Natural killer cell (primary cell): ENCODE measurements at regions of chr11 and their contacts with region 1.

Region 1: DNA sequence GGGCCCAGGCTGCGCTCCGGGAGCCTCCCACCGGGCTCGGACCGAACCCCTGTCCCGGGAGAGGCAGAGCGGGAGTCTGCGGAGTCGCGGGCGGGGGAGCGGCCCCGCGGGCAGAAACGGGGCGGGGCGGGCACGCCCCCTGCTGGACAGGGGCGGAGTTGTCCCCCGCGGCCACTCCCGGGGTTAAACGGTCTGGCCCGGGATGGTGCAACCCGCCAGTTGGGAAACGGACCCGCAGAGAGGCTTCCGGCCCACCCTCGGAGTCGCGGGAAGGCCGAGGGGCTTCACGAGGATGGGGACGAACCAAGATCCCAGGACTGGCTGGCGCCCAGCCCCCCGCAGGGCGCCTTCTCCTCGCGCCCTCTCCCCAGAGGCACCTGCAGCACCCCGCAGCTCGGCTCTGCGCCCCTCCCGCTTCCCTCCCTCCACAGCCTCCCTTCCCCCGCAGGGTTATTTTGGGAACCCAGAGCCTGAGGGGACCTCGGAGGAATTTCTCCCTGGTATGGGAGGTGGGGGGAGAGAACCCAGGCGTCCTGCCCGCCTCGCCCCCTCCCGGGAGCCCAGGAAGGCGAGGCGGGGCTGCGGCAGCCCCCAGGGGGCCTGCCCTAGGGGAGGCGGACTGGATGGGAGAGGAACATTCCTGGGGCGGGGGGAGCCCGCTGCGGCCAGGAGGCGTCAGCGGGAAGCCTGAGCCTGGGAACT is 902 bp downstream of the RASGRP2 start:
- DNase-seq: peak; percentile 81 to 86
- ATAC-seq: peak; percentile 22 to 48 (median 23)
- H3K4me3 ChIP-seq: peak overlapping the region; percentile 61
- H3K4me3 Mint-ChIP-seq: peak overlapping the region; percentile 99
- H3K27ac ChIP-seq: peak overlapping the region; percentile 82
- H3K27ac Mint-ChIP-seq: peak overlapping the region; percentile 98
- H3K4me1 ChIP-seq: peaks cover 48% of the 10 kb centered on the region
- H3K4me1 Mint-ChIP-seq: peaks cover 33 to 69% of the 10 kb centered on the region in 2 donors
- H3K27me3 ChIP-seq: no peaks in the 10 kb centered on the region
- H3K27me3 Mint-ChIP-seq: no peaks in the 10 kb centered on the region
- CTCF ChIP-seq: peak; percentile 72

Region 2: GRCh38 chr11:64767344-64768299 is 24.6 kb after region 1 on chr11:
- intact Hi-C with region 1: loop called (anchors 1 kb)
- DNase-seq: peak; percentile 76 to 91
- ATAC-seq: peak; percentile 39 to 58 (median 42)
- H3K4me3 ChIP-seq: no peak overlapping the region
- H3K4me3 Mint-ChIP-seq: peak overlapping the region; percentile 52
- H3K27ac ChIP-seq: peak overlapping the region; percentile 51
- H3K27ac Mint-ChIP-seq: peak overlapping the region; percentile 83 to 95
- H3K4me1 ChIP-seq: peaks cover 60% of the 10 kb centered on the region
- H3K4me1 Mint-ChIP-seq: peaks cover 80 to 85% of the 10 kb centered on the region in 2 donors
- H3K27me3 ChIP-seq: no peaks in the 10 kb centered on the region
- H3K27me3 Mint-ChIP-seq: no peaks in the 10 kb centered on the region
- CTCF ChIP-seq: peak; percentile 91

Region 3: DNA sequence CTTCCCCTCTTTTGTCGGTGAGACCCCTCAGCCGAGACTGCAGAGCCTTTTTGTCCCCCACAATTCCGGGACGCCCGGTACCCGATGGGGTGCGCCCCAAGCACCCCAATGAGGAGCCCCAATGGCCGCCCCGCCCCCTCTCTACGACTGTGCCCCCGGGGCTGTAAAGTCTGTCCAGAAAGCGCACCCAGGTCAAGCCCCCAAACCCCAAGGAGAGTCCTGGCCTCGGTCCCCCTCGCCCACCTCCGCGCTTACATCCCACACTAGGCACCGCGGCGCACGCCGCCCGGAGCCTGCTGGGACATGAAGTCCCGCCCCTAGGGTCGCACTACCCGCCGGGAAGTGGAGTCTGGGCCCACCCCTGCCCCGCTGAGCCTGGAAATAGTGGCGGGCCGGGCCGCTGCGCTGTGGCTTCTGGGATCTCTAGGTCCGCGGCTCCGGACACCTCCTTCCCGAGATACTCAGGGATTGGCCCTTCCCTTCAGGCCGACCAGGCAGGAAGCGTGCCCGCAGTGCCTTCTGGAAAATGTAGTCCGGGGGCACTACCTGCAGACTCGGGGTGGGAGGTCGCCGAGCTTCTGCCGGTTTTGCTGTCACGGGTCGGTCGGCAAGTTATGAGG is 67.3 kb after region 1 on chr11 and contains the start of gene MEN1:
- intact Hi-C with region 1: loop called (anchors 5 kb)
- DNase-seq: peak; percentile 71 to 82
- ATAC-seq: peak; percentile 85 to 88 (median 87)
- H3K4me3 ChIP-seq: peak within 1 kb of the TSS; percentile 89
- H3K4me3 Mint-ChIP-seq: peak within 1 kb of the TSS; percentile 96
- H3K27ac ChIP-seq: peak within 1 kb of the TSS; percentile 93
- H3K27ac Mint-ChIP-seq: peak within 1 kb of the TSS; percentile 95 to 96
- H3K4me1 ChIP-seq: peaks cover 23% of the 10 kb centered on the region
- H3K4me1 Mint-ChIP-seq: peaks cover 17 to 26% of the 10 kb centered on the region in 2 donors
- H3K27me3 ChIP-seq: no peaks in the 10 kb centered on the region
- H3K27me3 Mint-ChIP-seq: no peaks in the 10 kb centered on the region
- CTCF ChIP-seq: no peak
- total RNA-seq, gene MEN1: 29.3 to 42.2 (median 32.2) TPM